ENCODE measurements at regions of chr19 and their contacts with region 1.

Region 1: DNA sequence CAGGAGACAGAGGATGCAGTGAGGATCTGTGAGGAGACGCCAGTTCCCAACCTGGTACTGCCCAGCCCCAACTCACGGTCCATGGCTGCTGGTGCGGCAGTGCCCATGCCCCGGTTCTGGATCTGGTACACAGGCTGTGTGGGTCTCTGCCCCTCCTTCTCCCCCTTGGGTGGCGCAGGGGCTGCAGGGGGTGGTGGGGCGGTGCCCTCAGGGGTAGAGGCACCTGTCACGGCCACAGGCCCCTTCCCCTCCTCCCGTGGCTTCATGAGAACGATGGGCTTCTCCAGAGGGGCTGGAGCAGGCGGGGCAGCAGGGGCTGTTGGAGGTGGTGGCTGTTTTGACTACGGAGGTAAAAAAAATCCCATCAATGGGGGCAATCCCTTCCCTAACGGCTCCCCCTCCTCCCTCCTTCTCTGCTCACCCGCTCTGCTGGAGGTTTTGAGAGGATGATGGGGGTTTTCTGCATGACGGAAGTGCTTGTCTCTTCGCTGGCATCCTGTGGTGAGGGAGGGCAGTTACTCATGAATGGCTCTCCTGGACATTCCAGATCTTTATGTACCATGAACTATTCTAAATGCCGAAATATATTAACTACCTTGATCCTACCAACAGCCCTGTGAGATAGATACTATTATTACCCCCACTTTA is 7.1 kb downstream of the SMG9 start:
- DNase-seq: no peak
- H3K4me3 ChIP-seq: no peak overlapping the region
- H3K27ac ChIP-seq: no peak overlapping the region
- H3K4me1 ChIP-seq: no peaks in the 10 kb centered on the region
- H3K27me3 ChIP-seq: no peaks in the 10 kb centered on the region
- CTCF ChIP-seq: no peak

Region 2: GRCh38 chr19:43784981-43785808 is 37.5 kb after region 1 on chr19:
- intact Hi-C with region 1: loop called (anchors 2 kb)
- DNase-seq: peak; percentile 79
- H3K4me3 ChIP-seq: no peak overlapping the region
- H3K27ac ChIP-seq: peak overlapping the region; percentile 34
- H3K4me1 ChIP-seq: peaks cover 5% of the 10 kb centered on the region
- H3K27me3 ChIP-seq: no peaks in the 10 kb centered on the region
- CTCF ChIP-seq: peak; percentile 98